ENCODE measurements at regions of chr5 and their contacts with region 1.

Region 1: DNA sequence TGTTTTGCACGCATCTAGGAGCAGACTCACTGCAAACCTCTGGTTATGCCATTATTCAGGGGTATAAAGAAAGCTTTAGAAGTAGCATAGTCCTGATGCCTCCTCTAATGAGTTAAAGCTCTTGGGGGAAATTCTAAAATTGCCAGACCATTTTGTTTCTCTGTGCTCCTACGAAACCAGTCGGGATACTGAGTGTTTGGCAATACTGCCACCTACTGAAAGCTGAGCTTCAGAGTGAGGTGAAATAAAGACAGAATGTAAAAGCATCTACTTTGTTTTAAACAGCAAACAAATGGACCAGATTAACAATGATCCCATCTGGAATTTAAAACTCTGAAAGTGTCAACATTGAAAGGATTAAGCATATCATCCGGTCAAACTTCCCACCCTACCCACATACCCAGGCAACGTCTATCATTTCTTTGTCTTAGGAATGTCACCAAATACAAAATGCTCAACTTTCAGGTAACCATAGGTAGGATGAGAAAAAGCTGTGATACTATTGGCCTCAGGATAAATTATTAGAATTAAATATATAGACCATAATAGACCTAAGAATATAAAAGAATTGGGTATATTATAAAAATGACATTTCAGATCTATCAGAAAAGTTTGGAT is 77.8 kb upstream of the SHISAL2B start:
- DNase-seq: no peak
- ATAC-seq: peak; percentile 49 to 80 (median 54)
- H3K4me3 ChIP-seq: no peak overlapping the region
- H3K27ac ChIP-seq: no peak overlapping the region
- H3K4me1 ChIP-seq: no peaks in the 10 kb centered on the region
- H3K27me3 ChIP-seq: no peaks in the 10 kb centered on the region
- CTCF ChIP-seq: peak; percentile 72

Region 2: GRCh38 chr5:64074533-64074932 is 537.9 kb before region 1 on chr5:
- intact Hi-C with region 1: loop called in 1 of 2 experiments (anchors 10 kb)
- DNase-seq: no peak
- ATAC-seq: peak in 1 of 4 donors; percentile 44
- H3K4me3 ChIP-seq: no peak overlapping the region
- H3K27ac ChIP-seq: no peak overlapping the region
- H3K4me1 ChIP-seq: no peaks in the 10 kb centered on the region
- H3K27me3 ChIP-seq: no peaks in the 10 kb centered on the region
- CTCF ChIP-seq: peak; percentile 44

Region 3: GRCh38 chr5:64147849-64148441 is 464.5 kb before region 1 on chr5:
- intact Hi-C with region 1: loop called (anchors 1 to 5 kb)
- DNase-seq: peak; percentile 37 to 70
- ATAC-seq: peak in 3 of 4 donors; percentile 48 to 82 (median 49)
- H3K4me3 ChIP-seq: no peak overlapping the region
- H3K27ac ChIP-seq: no peak overlapping the region
- H3K4me1 ChIP-seq: peaks cover 17% of the 10 kb centered on the region
- H3K27me3 ChIP-seq: no peaks in the 10 kb centered on the region
- CTCF ChIP-seq: peak; percentile 78

Region 4: DNA sequence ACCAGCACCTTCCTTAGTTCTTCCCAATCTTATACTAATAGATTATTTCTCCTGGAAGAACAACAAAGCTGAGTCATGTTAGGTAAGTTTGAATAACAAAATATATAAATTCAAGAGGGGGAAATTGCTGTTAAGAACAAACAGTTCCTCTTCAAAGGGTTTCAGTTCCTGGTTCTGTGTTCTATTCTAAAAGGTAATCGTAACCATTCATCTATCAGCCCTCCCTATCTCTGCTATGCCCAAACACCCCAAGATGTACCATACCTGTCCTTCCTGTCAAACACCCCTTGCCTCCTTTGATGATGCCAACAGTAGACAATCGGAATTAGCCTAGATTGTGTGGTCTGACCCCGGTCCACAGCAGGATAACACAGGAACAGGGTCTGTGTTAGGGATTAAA is 451.0 kb before region 1 on chr5:
- intact Hi-C with region 1: loop called in 1 of 2 experiments (anchors 5 kb)
- DNase-seq: no peak
- ATAC-seq: no peak
- H3K4me3 ChIP-seq: no peak overlapping the region
- H3K27ac ChIP-seq: no peak overlapping the region
- H3K4me1 ChIP-seq: peaks cover 7% of the 10 kb centered on the region
- H3K27me3 ChIP-seq: no peaks in the 10 kb centered on the region
- CTCF ChIP-seq: no peak

Region 5: DNA sequence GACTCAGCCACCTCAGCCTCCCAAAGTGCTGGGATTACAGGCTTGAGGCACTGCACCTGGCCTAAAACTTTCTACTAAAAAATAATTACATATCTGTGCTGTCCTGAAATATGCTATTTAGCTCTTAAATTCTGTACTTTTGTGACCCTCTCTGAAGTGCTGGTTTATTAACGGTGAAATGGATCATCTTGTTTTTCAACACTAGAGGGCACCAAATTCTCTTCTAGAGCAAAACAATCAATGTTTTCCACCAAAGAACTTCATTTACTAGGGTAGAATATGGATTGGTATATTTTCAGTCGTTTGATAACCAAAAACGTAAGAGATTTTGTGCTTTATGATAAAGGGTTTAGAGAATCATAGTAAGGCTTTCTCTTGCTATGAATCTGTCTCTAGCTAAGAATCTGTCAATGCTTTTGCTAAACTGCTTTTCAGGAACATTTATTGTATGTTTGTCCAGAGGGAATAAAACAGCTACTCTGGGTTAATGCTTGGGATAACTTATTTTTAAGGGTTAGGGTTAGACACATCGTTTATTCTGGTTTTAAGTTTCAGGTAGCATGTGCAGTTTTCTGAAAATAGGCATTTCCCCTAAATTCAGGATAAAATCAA is 383.2 kb before region 1 on chr5:
- intact Hi-C with region 1: loop called (anchors 1 to 2 kb)
- DNase-seq: no peak
- ATAC-seq: peak in 1 of 4 donors; percentile 55
- H3K4me3 ChIP-seq: no peak overlapping the region
- H3K27ac ChIP-seq: no peak overlapping the region
- H3K4me1 ChIP-seq: no peaks in the 10 kb centered on the region
- H3K27me3 ChIP-seq: no peaks in the 10 kb centered on the region
- CTCF ChIP-seq: peak; percentile 68

Region 6: DNA sequence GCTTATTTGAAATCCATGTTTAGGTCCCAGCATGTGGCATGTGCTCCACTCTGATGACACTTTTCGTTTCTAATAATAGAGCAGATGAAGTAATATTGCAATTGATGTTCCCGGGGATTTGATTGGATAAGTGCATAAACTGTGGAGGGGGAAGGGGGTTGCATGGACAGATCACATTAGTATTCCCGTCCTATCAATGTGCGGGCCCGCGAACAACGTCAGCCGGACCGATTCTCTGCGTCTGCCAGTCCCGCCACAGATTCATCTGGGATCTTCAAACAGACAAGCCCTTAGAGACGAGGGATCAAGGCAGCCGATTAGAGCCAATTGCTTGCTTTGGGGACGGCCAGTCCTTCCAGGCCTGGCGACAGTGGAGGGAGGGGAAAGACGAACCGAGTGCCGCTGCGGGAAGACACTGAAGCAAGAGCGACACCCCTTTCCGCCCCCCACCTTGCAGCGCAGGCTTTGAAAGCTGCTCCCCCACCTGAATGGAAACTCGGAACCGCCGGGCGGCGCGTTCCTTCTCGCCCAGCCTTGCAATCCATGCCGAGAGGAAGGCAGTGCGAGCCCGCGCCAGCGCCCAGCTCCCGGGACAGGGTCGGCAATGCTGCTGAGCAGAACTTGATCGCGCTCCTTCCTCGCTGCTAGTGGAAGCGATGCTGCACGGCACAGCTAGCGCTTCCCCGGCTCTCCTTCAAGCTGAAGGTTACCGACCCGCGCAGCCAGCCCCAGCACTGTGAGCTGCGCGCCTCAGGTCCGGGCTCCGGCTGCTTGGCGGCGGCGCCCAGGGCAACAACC is 106.5 kb before region 1 on chr5 and contains the start of gene RGS7BP:
- intact Hi-C with region 1: loop called in 1 of 2 experiments (anchors 5 kb)
- DNase-seq: peak; percentile 20 to 63
- ATAC-seq: peak; percentile 77 to 94 (median 88)
- H3K4me3 ChIP-seq: peak within 1 kb of the TSS; percentile 78
- H3K27ac ChIP-seq: no peak within 1 kb of the TSS
- H3K4me1 ChIP-seq: peaks cover 3% of the 10 kb centered on the region
- H3K27me3 ChIP-seq: peaks cover 0 to 5% (median 0%) of the 10 kb centered on the region in 3 donors
- CTCF ChIP-seq: no peak
- total RNA-seq, gene RGS7BP: 0.17 to 1.5 (median 0.41) TPM

Measured in psoas muscle (tissue), 8 donors.